Endothelial cell of umbilical vein (primary cell): ENCODE measurements at regions of chr12 and their contacts with region 1.

Region 1: DNA sequence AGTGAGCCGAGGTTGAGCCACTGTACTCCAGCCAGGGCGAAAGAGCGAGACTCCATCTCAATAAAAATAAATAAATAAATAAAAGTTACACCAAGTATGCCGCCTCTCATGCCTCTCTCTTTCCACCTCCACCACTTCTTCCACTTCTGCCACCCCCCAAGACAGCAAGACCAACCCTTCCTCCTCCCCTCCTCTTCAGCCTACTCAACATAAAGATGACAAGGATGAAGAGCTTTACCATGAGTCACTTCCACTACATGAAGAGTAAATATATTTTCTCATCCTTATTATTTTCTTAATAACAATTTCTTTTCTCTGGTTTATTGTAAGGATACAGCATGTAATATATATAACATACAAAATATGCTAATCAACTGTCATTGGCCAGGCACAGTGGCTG is 3.6 kb upstream of the TMED2 start:
- DNase-seq: no peak
- H3K4me3 ChIP-seq: no peak overlapping the region
- H3K27ac ChIP-seq: no peak overlapping the region
- H3K4me1 ChIP-seq: peaks cover 15% of the 10 kb centered on the region
- H3K27me3 ChIP-seq: no peaks in the 10 kb centered on the region
- CTCF ChIP-seq: no peak
- POLR2A ChIP-seq: no peak

Region 2: GRCh38 chr12:123271001-123271729 is 309.6 kb before region 1 on chr12:
- CTCF ChIA-PET with region 1: interaction called, 7 read pairs
- POLR2A ChIA-PET with region 1: interaction called, 5 read pairs
- dilution Hi-C with region 1: no loop called
- intact Hi-C with region 1: loop called (anchors 1 kb)
- DNase-seq: no peak
- H3K4me3 ChIP-seq: peak overlapping the region; percentile 32 to 90 (median 87)
- H3K27ac ChIP-seq: peak overlapping the region; percentile 83
- H3K4me1 ChIP-seq: peaks cover 26% of the 10 kb centered on the region
- H3K27me3 ChIP-seq: no peaks in the 10 kb centered on the region
- CTCF ChIP-seq: peak; percentile 42 to 57
- POLR2A ChIP-seq: no peak

Region 3: DNA sequence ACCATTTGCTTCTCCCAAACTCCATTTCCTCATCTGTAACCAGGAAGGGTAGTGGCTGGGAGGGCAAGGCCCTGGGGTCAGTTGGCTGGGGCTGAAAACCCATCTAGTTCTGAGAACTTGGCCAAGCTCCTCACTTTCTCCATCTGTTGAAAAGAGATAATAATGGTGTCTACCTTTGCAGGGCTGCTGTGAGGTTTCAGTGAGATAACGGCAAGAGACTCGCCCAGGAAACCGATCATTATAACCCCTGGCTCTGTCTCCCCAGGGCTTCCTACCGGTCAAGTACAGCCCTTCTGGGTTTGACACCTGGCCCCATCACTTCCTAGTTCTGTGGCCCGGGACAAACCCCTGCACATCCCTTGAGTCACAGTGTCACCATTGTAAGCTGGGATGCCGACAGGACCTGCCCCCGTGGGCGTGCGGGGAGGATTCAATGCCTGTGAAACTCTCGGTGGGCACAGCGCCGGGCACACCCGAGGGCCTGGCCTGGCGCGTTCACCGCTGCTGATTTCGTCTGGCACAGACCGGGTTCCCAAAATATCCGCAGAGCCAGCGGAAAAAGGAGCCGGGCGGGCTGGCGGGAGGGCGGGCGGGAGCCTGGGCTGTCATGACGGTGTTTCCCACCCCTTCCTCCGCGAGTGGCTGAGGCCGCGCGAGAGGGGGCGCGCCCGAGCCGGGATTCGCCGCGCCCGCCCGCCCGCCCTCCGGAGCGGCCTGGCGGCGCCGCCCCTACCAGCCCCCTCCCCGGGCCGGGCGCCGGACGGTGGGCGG is 192.4 kb before region 1 on chr12:
- CTCF ChIA-PET with region 1: interaction called, 6 read pairs
- POLR2A ChIA-PET with region 1: interaction called, 4 read pairs
- dilution Hi-C with region 1: no loop called
- intact Hi-C with region 1: loop called (anchors 2 kb)
- DNase-seq: peak; percentile 61
- H3K4me3 ChIP-seq: peak overlapping the region in 2 of 3 experiments; percentile 33 to 46
- H3K27ac ChIP-seq: peak overlapping the region; percentile 39
- H3K4me1 ChIP-seq: peaks cover 36% of the 10 kb centered on the region
- H3K27me3 ChIP-seq: no peaks in the 10 kb centered on the region
- CTCF ChIP-seq: no peak
- POLR2A ChIP-seq: peak; percentile 55

Region 4: GRCh38 chr12:123457980-123458783 is 122.6 kb before region 1 on chr12 and contains the start of gene SNRNP35:
- CTCF ChIA-PET with region 1: interaction called, 7 read pairs
- POLR2A ChIA-PET with region 1: no interaction called
- dilution Hi-C with region 1: no loop called
- intact Hi-C with region 1: loop called (anchors 5 kb)
- DNase-seq: peak; percentile 89
- H3K4me3 ChIP-seq: peak within 1 kb of the TSS; percentile 50 to 96 (median 56)
- H3K27ac ChIP-seq: peak within 1 kb of the TSS; percentile 93
- H3K4me1 ChIP-seq: no peaks in the 10 kb centered on the region
- H3K27me3 ChIP-seq: no peaks in the 10 kb centered on the region
- CTCF ChIP-seq: no peak
- POLR2A ChIP-seq: peak; percentile 83
- total RNA-seq, gene SNRNP35: 27.9 and 30.6 TPM in 2 replicates

Region 5: GRCh38 chr12:123522164-123522563 is 58.6 kb before region 1 on chr12:
- CTCF ChIA-PET with region 1: interaction called, 12 read pairs
- POLR2A ChIA-PET with region 1: no interaction called
- dilution Hi-C with region 1: no loop called
- intact Hi-C with region 1: no loop called
- DNase-seq: no peak
- H3K4me3 ChIP-seq: no peak overlapping the region
- H3K27ac ChIP-seq: no peak overlapping the region
- H3K4me1 ChIP-seq: no peaks in the 10 kb centered on the region
- H3K27me3 ChIP-seq: no peaks in the 10 kb centered on the region
- CTCF ChIP-seq: no peak
- POLR2A ChIP-seq: no peak